ENCODE measurements at regions of chr7 and their contacts with region 1.

Region 1: DNA sequence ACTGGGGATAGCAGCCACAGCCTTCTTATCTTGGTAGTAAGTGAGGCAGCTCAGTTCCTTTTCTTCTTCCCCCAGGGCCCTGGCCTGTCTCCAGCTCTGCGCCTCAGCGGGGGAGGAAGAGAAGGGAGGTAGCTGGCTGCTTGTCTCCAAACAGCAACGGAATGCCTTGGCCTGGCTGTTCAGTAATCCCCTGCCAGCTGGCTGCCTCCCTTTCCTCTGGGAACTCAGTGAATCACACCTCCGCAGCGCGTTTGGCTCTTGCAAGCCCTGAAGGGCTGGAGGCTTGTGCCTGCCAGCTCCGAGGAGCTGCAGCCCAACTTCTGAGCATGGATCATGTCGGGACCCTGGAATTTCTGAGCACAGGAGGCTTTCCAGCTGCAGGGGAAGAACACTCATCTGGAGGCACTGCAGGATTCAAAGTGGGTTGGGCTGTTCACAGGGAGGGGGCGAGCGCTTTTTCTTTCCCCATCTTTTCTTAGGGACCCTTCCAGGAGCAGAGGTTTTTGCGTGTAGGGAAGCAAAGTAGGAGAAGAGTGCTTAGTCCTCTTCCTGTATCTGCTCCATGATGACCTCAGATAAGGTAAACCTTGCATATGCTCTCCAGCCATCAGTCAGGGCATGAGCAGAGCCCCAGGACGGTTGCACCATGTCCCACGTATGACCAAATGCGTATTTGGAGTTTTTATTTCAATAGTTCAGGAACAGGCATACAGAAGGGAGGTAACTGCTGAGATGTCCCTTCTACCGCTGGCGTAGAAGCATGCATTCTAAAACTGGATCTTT is 253.2 kb upstream of the INHBA start:
- DNase-seq: peak; percentile 92 to 98
- H3K4me3 ChIP-seq: no peak overlapping the region
- CTCF ChIP-seq: no peak
- POLR2A ChIP-seq: no peak

Region 2: GRCh38 chr7:41277561-41277960 is 678.5 kb before region 1 on chr7:
- intact Hi-C with region 1: loop called (anchors 10 kb)
- DNase-seq: no peak
- H3K4me3 ChIP-seq: no peak overlapping the region
- CTCF ChIP-seq: no peak
- POLR2A ChIP-seq: no peak

Measured in lower leg skin (tissue), 4 donors.